ENCODE measurements at regions of chr10 and their contacts with region 1.

Region 1: DNA sequence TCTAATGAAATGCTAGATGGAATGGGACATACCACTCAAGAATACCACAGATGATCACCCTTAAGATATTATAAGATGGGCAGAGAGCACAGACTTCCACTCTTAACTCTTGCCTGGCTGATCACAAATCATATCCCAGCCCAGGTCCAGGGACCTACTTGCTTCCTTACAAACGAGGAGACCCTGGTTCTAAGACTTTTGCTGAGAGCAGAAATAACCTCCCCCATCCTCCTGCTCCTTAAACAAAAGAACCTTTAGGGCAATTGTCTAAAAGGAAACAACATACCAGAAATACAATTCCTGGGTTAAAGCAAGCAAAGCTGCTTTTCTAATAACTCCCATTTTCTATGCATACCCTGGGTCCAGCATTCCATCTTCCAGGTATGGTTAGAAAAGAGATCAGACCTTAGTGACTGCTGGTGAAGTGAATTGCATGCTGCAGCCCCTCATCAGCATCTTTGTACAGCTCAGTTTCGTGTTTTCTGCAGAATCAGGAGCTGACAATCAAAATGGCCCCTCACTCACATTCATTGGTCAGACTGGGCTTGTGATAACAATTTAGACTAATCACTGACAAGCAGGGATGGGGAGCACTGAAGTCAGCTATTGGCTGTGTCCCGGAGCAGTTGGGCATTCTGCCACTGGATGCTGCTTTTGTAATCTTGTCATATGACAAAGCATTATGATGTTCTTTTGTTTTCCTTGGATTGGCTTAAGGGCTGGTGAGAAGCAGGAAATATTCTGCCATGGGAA is 14.6 kb downstream of the IFIT3 start:
- DNase-seq: peak; percentile 71 to 98 (median 90)
- H3K4me3 ChIP-seq: peak overlapping the region; percentile 30 to 84 (median 67)
- H3K27ac ChIP-seq: peak overlapping the region; percentile 78 to 99 (median 95)
- H3K27me3 ChIP-seq: no peaks in the 10 kb centered on the region
- CTCF ChIP-seq: peak in 7 of 56 donors; percentile 6 to 24 (median 18)

Region 2: GRCh38 chr10:89301721-89302445 is 40.5 kb before region 1 on chr10 and contains the start of gene IFIT2:
- intact Hi-C with region 1: loop called in 1 of 2 experiments (anchors 5 kb)
- DNase-seq: peak in 4 of 10 donors; percentile 23 to 53 (median 49)
- H3K4me3 ChIP-seq: peak within 1 kb of the TSS; percentile 42 to 78 (median 62)
- H3K27ac ChIP-seq: peak within 1 kb of the TSS; percentile 79 to 99 (median 97)
- H3K27me3 ChIP-seq: no peaks in the 10 kb centered on the region
- CTCF ChIP-seq: peak in 15 of 56 donors; percentile 6 to 26 (median 13)
- total RNA-seq, gene IFIT2: 7.7 to 52.2 (median 13.2) TPM

Measured in dorsolateral prefrontal cortex (tissue), 120 donors.